Mammary epithelial cell (primary cell): ENCODE measurements at regions of chr6 and their contacts with region 1.

Region 1: DNA sequence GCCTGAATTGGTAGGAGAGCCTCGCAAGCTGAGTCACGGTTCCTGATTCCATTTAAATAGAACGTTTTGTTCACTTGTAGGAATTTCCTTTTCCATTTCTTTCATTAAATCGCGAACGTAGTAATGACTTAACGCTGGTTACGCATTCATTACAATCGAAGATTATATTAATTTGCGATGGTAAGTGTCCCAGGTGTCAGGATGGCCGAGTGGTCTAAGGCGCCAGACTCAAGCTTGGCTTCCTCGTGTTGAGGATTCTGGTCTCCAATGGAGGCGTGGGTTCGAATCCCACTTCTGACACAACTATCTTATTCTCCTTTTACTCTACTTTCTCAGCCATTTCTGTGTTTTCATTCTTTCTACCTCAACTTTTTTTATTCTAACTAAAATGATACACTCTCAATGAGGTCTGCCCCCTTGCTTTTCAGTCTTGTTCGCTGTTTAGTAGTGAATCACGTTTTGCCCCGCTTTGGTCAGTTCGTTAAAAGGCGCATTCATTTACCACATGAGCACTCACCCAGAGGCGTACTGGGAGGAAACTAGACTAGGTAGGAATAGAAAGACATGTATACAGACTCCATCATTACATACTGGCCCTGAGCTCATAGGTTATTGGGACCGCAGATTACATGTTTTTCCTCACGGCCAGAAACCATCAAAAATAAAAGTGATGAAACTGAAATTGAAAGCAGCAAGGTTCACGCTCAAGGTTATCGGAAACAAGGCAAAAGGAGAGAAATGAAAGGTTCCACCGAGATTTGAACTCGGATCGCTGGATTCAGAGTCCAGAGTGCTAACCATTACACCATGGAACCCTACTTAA is 17.3 kb upstream of the TRIM27 start:
- DNase-seq: peak; percentile 86
- H3K4me3 ChIP-seq: peak overlapping the region; percentile 67 to 84 (median 73)
- H3K27ac ChIP-seq: peak overlapping the region; percentile 62
- H3K4me1 ChIP-seq: peaks cover 7% of the 10 kb centered on the region
- H3K27me3 ChIP-seq: no peaks in the 10 kb centered on the region
- CTCF ChIP-seq: no peak

Region 2: GRCh38 chr6:28683944-28684538 is 257.0 kb before region 1 on chr6:
- CTCF ChIA-PET with region 1: no interaction called
- dilution Hi-C with region 1: no loop called
- in situ Hi-C with region 1: no loop called
- intact Hi-C with region 1: loop called (anchors 1 kb)
- DNase-seq: peak; percentile 46
- H3K4me3 ChIP-seq: peak overlapping the region in 1 of 3 experiments; percentile 9
- H3K27ac ChIP-seq: no peak overlapping the region
- H3K4me1 ChIP-seq: peaks cover 8% of the 10 kb centered on the region
- H3K27me3 ChIP-seq: no peaks in the 10 kb centered on the region
- CTCF ChIP-seq: peak; percentile 66 to 73

Region 3: GRCh38 chr6:28789553-28790083 is 151.5 kb before region 1 on chr6:
- CTCF ChIA-PET with region 1: no interaction called
- dilution Hi-C with region 1: no loop called
- in situ Hi-C with region 1: no loop called
- intact Hi-C with region 1: loop called (anchors 5 kb)
- DNase-seq: peak; percentile 76
- H3K4me3 ChIP-seq: peak overlapping the region; percentile 49 to 72 (median 54)
- H3K27ac ChIP-seq: no peak overlapping the region
- H3K4me1 ChIP-seq: peaks cover 5% of the 10 kb centered on the region
- H3K27me3 ChIP-seq: peaks cover 32% of the 10 kb centered on the region
- CTCF ChIP-seq: no peak

Region 4: DNA sequence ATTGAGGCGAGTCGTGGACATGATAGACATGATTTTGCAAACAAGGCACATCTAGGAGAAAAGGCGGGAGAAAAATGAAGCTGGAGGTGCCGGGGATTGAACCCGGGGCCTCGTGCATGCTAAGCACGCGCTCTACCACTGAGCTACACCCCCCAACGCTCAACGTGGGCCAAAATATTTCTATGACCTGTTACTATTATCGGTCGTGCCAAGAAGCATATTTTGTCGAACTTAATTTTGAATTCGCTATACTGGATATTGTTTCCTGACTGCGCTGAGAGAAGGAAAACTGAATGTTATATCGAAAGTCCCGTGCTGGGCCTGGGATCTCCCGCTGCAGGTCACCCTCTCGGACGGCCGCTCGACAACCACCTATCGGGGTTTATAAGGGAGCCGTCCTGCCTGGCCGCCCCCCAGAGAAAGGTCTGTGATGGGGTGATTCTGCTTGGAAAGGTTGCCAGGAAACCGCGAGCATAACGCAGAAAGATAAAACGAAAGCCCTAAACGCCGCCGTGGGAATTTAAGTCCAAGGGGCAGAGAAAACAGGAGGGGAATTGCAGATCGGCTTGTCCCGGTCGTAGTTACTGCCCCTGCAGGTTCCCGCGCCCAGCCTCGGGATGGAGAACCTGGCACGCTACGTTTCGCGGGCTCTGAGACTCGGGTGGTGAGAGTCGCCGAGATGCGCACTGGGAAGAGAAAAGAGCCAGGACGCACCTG is 77.3 kb before region 1 on chr6:
- CTCF ChIA-PET with region 1: no interaction called
- dilution Hi-C with region 1: no loop called
- in situ Hi-C with region 1: no loop called
- intact Hi-C with region 1: loop called (anchors 1 kb)
- DNase-seq: peak; percentile 76
- H3K4me3 ChIP-seq: peak overlapping the region; percentile 57 to 85 (median 69)
- H3K27ac ChIP-seq: peak overlapping the region; percentile 50
- H3K4me1 ChIP-seq: peaks cover 12% of the 10 kb centered on the region
- H3K27me3 ChIP-seq: no peaks in the 10 kb centered on the region
- CTCF ChIP-seq: no peak

Region 5: GRCh38 chr6:28923318-28924102 is 17.6 kb before region 1 on chr6 and contains the start of gene TRIM27:
- CTCF ChIA-PET with region 1: no interaction called
- dilution Hi-C with region 1: no loop called
- in situ Hi-C with region 1: no loop called
- intact Hi-C with region 1: loop called (anchors 1 kb)
- DNase-seq: peak; percentile 81
- H3K4me3 ChIP-seq: peak within 1 kb of the TSS; percentile 67 to 88 (median 73)
- H3K27ac ChIP-seq: peak within 1 kb of the TSS; percentile 82
- H3K4me1 ChIP-seq: peaks cover 19% of the 10 kb centered on the region
- H3K27me3 ChIP-seq: no peaks in the 10 kb centered on the region
- CTCF ChIP-seq: peak in 1 of 2 donors; percentile 2
- total RNA-seq, gene TRIM27: 45.3 to 49.2 TPM

Region 6: DNA sequence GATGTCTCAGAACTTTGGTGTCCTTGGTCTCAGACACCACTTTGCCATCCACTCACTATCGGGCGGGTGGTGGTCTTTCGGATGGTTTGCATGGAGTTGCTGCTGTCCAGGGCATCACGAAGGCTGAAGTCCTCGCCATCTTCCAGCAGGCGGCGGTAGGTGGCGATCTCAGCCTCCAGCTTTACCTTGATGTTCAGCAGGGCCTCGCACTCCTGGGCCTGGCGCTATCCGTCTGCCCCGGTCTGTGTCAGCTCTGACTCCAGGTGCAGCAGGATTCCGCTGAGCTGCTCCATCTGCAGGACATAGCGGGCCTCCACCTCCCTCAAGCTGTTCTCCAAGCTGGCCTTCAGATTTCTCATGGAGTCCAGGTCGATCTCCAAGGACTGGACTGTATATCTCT is 28.1 kb after region 1 on chr6:
- CTCF ChIA-PET with region 1: no interaction called
- dilution Hi-C with region 1: no loop called
- in situ Hi-C with region 1: no loop called
- intact Hi-C with region 1: no loop called
- DNase-seq: no peak
- H3K4me3 ChIP-seq: no peak overlapping the region
- H3K27ac ChIP-seq: no peak overlapping the region
- H3K4me1 ChIP-seq: no peaks in the 10 kb centered on the region
- H3K27me3 ChIP-seq: no peaks in the 10 kb centered on the region
- CTCF ChIP-seq: no peak

Region 7: GRCh38 chr6:29016559-29017427 is 75.7 kb after region 1 on chr6:
- CTCF ChIA-PET with region 1: no interaction called
- dilution Hi-C with region 1: no loop called
- in situ Hi-C with region 1: no loop called
- intact Hi-C with region 1: loop called (anchors 1 kb)
- DNase-seq: peak; percentile 66
- H3K4me3 ChIP-seq: peak overlapping the region; percentile 53 to 57 (median 54)
- H3K27ac ChIP-seq: no peak overlapping the region
- H3K4me1 ChIP-seq: peaks cover 9% of the 10 kb centered on the region
- H3K27me3 ChIP-seq: no peaks in the 10 kb centered on the region
- CTCF ChIP-seq: peak; percentile 84 to 93